A673 (cell line): ENCODE measurements at regions of chr2 and their contacts with region 1.

Region 1: DNA sequence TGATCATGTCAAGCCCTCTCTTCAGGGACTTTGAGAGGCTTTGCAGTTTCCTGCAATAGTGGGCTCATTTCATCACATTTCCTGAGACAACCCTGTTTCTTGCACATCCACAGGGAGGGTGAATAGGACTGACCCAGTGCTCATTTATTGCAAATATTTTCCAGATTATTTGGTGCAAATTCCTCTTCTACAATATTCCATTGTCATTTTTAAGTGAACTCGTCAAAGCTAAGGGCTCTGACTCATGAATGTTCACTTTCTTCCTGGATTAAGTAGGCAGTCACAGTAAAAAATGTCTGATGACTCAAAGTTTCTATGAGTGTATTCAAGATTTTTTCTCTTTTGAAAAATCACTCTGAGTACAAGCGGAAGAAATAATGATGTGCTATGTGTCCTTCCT is 225.5 kb upstream of the GALNT5 start:
- DNase-seq: peak; percentile 82
- H3K4me3 ChIP-seq: no peak overlapping the region
- H3K27ac ChIP-seq: no peak overlapping the region
- H3K4me1 ChIP-seq: peaks cover 20% of the 10 kb centered on the region
- H3K27me3 ChIP-seq: no peaks in the 10 kb centered on the region
- CTCF ChIP-seq: no peak

Region 2: DNA sequence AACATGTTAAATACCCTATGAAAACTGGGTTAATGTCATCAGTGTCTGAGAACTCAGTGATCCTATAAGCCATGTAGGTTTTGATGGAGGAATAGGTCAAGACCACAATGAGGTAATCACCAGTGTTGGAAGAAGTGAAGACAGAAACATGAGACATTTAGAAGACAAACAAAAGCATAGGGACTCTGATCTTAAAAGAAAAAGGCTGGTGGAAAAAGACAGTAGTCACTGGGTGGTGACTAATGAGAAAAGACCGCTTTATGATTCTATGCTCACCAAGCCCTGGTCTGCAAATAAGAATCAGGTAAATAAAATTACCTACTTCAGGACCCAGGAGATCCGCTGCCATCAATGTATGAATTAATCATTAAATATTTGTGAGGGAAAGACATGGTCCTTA is 324.0 kb before region 1 on chr2:
- CTCF ChIA-PET with region 1: no interaction called
- POLR2A ChIA-PET with region 1: no interaction called
- intact Hi-C with region 1: no loop called
- DNase-seq: no peak
- H3K4me3 ChIP-seq: no peak overlapping the region
- H3K27ac ChIP-seq: no peak overlapping the region
- H3K4me1 ChIP-seq: peaks cover 9% of the 10 kb centered on the region
- H3K27me3 ChIP-seq: no peaks in the 10 kb centered on the region
- CTCF ChIP-seq: no peak

Region 3: DNA sequence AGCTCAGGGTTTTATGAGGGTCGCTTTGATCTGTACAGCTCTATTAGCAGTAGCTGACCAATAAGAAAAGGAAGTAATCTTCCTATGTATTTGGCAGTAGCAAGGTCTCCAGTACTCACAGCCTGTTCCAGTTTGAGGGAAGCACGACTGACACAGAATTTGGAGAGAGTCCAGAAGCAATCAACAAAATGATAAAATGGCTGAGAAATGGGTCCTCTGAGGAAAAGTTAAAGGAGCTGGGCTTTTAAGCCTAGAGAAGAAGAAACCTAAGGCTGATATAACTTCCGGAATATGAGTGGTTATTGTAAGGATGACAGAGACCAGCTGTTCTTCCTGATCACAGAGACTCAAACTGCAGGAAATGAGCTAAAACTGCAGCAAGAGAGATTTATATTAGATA is 213.1 kb before region 1 on chr2:
- CTCF ChIA-PET with region 1: no interaction called
- POLR2A ChIA-PET with region 1: no interaction called
- intact Hi-C with region 1: loop called (anchors 5 kb)
- DNase-seq: peak; percentile 96
- H3K4me3 ChIP-seq: no peak overlapping the region
- H3K27ac ChIP-seq: no peak overlapping the region
- H3K4me1 ChIP-seq: peaks cover 32% of the 10 kb centered on the region
- H3K27me3 ChIP-seq: peaks cover 17% of the 10 kb centered on the region
- CTCF ChIP-seq: no peak